ENCODE measurements at regions of chr19 and their contacts with region 1.

Region 1: DNA sequence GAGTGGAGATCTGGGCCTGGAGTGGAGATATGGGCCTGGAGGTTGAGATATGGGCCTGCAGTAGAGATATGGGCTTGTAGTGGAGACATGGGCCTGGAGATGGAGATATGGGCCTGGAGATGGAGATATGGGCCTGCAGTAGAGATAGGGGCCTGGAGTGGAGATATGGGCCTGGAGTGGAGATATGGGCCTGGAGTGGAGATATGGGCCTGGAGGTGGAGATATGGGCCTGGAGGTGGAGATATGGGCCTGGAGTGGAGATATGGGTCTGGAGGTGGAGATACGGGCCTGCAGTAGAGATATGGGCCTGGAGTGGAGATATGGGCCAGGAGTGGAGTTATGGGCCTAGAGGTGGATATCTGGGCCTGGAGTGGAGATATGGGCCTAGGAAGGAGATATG is 402 bp downstream of the KIR2DL3 start:
- DNase-seq: no peak
- ATAC-seq: no peak
- H3K4me3 ChIP-seq: no peak overlapping the region
- H3K27ac ChIP-seq: no peak overlapping the region
- H3K4me1 ChIP-seq: no peaks in the 10 kb centered on the region
- H3K27me3 ChIP-seq: no peaks in the 10 kb centered on the region
- CTCF ChIP-seq: no peak
- POLR2A ChIP-seq: no peak

Region 2: DNA sequence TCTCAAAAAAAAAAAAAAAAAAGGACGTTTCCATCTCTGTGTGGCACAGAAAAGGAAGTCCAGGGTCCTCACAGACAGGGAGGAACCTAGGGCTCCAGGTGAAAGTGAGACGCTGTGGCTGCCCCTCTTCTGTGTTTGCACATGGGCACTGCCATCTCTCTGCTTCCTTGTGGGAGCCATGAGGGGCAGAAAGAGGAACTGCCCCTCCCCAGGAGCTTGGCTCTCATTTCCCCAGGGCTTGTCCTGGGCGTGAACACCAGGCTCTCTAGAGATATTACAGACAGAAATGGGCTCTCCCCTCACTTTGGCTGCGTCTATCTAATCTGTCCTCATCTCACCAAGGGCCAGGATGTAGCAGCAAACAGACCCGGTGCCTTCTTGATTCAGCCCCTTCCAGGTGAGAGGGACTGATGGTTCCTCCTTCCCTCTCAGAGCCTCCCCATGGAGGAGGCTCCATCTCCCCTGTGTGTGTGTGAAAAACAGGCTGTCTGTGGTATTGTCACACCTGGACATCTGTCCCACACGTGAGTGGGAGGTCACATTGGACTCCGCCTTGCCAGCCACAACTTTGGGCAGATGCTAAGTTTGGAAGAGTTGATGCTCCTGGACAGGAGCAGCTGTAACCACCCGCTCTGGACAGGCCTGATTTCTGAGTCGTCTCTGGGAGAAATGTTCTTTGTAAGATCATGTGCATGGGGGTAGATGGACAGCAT is 398.9 kb before region 1 on chr19:
- intact Hi-C with region 1: no loop called
- DNase-seq: peak in 1 of 5 donors; percentile 49
- ATAC-seq: peak in 1 of 4 donors; percentile 41
- H3K4me3 ChIP-seq: no peak overlapping the region
- H3K27ac ChIP-seq: no peak overlapping the region
- H3K4me1 ChIP-seq: peaks cover 0 to 25% (median 0%) of the 10 kb centered on the region in 12 donors
- H3K27me3 ChIP-seq: peaks cover 0 to 3% (median 0%) of the 10 kb centered on the region in 9 donors
- CTCF ChIP-seq: no peak
- POLR2A ChIP-seq: no peak

Region 3: GRCh38 chr19:54633401-54633800 is 105.3 kb before region 1 on chr19:
- intact Hi-C with region 1: no loop called
- DNase-seq: no peak
- ATAC-seq: no peak
- H3K4me3 ChIP-seq: no peak overlapping the region
- H3K27ac ChIP-seq: no peak overlapping the region
- H3K4me1 ChIP-seq: peaks cover 0 to 7% (median 0%) of the 10 kb centered on the region in 12 donors
- H3K27me3 ChIP-seq: peaks cover 0 to 36% (median 2%) of the 10 kb centered on the region in 9 donors
- CTCF ChIP-seq: no peak
- POLR2A ChIP-seq: no peak

Region 4: DNA sequence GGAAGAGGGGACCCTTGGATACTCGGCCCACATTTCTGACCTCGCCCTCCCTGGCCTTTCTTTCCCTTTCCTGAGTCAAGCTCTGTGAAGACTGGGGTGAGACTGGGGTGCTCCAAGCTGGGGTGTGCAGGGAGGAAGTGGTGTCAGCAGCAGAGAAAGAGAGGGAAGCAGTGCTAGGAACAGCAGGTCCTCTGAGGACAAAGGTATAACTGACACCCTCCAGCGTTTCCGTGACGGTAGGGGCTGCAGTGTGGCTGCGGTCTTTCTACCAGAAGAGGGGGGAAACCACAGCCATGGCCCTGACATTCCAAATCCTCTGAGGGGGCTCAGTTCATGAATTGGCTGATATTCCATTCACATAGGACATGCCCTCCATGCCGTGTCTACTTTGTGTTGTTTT is 112.6 kb after region 1 on chr19:
- intact Hi-C with region 1: loop called in 3 of 10 experiments (anchors 2 to 5 kb)
- DNase-seq: no peak
- ATAC-seq: no peak
- H3K4me3 ChIP-seq: no peak overlapping the region
- H3K27ac ChIP-seq: no peak overlapping the region
- H3K4me1 ChIP-seq: no peaks in the 10 kb centered on the region
- H3K27me3 ChIP-seq: peaks cover 0 to 12% (median 0%) of the 10 kb centered on the region in 9 donors
- CTCF ChIP-seq: no peak
- POLR2A ChIP-seq: no peak

Measured in heart left ventricle (tissue), 16 donors.